CD14-positive monocyte (primary cell): ENCODE measurements at regions of chr17 and their contacts with region 1.

Region 1: GRCh38 chr17:42720996-42721583 is 23.8 kb downstream of the EZH1 start:
- DNase-seq: peak; percentile 41 to 69 (median 56)
- H3K4me3 ChIP-seq: no peak overlapping the region
- H3K4me3 Mint-ChIP-seq: no peak overlapping the region
- H3K27ac ChIP-seq: no peak overlapping the region
- H3K27ac Mint-ChIP-seq: no peak overlapping the region
- H3K4me1 ChIP-seq: no peaks in the 10 kb centered on the region
- H3K4me1 Mint-ChIP-seq: no peaks in the 10 kb centered on the region
- H3K27me3 ChIP-seq: no peaks in the 10 kb centered on the region
- H3K27me3 Mint-ChIP-seq: no peaks in the 10 kb centered on the region
- CTCF ChIP-seq: peak; percentile 80

Region 2: GRCh38 chr17:42403150-42403549 is 317.9 kb before region 1 on chr17:
- intact Hi-C with region 1: no loop called
- DNase-seq: no peak
- H3K4me3 ChIP-seq: no peak overlapping the region
- H3K4me3 Mint-ChIP-seq: peak overlapping the region in 1 of 2 donors; percentile 12
- H3K27ac ChIP-seq: no peak overlapping the region
- H3K27ac Mint-ChIP-seq: peak overlapping the region in 1 of 7 donors; percentile 13
- H3K4me1 ChIP-seq: peaks cover 14 to 17% of the 10 kb centered on the region in 2 donors
- H3K4me1 Mint-ChIP-seq: peaks cover 20% of the 10 kb centered on the region
- H3K27me3 ChIP-seq: peaks cover 0 to 7% of the 10 kb centered on the region in 2 donors
- H3K27me3 Mint-ChIP-seq: peaks cover 9 to 17% (median 13%) of the 10 kb centered on the region in 3 donors
- CTCF ChIP-seq: no peak

Region 3: DNA sequence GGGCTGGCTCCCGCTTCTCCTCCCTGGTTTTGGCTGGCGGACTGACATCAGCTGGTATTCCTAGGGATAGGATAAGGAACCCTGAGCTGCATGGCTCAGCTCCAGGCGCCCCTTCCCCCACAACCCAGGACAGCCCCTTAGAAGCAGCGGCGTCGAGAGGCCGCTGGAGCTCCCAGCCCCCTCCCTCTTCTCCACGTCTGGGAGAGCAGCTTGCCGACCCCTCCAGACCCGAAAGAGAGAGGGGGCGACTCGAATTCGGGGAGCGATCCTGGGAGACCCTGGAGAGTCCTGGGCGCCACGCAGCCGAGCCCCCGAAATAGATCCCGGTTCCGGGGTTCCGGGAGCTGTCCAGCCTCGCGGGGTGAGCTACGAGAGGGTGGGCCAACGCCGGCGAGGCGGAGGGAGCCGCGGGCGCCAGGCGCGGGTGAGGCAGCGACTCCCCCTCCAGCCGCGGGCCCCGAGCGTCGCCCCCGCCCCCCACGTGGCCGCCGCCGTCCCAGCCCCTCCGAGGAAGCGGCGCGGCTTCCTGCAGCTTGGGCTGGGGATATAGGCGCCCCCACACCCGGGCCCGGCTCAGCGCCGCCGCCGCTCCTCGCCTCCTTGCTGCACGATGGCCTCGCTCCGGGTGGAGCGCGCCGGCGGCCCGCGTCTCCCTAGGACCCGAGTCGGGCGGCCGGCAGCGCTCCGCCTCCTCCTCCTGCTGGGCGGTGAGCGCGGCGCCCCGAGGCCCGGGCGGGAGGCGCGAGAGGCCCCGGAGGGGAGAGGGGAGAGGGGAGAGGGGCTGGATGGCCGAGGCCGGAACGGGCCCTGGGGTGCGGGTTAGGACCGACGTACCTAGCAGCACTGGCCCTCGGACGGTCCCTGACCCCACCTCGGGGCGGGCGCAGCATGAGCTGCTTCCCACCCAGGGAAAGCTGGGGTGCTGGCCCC is 39.8 kb after region 1 on chr17 and contains the start of gene RAMP2:
- intact Hi-C with region 1: loop called (anchors 1 to 2 kb)
- DNase-seq: no peak
- H3K4me3 ChIP-seq: peak within 1 kb of the TSS in 1 of 3 experiments; percentile 59
- H3K4me3 Mint-ChIP-seq: peak within 1 kb of the TSS in 1 of 2 donors; percentile 78
- H3K27ac ChIP-seq: no peak within 1 kb of the TSS
- H3K27ac Mint-ChIP-seq: peak within 1 kb of the TSS in 1 of 7 donors; percentile 8
- H3K4me1 ChIP-seq: peaks cover 21% of the 10 kb centered on the region in 2 donors
- H3K4me1 Mint-ChIP-seq: peaks cover 18% of the 10 kb centered on the region
- H3K27me3 ChIP-seq: peaks cover 30 to 39% of the 10 kb centered on the region in 2 donors
- H3K27me3 Mint-ChIP-seq: peaks cover 46 to 63% (median 50%) of the 10 kb centered on the region in 3 donors
- CTCF ChIP-seq: no peak
- polyA plus RNA-seq, gene RAMP2: not detected

Region 4: DNA sequence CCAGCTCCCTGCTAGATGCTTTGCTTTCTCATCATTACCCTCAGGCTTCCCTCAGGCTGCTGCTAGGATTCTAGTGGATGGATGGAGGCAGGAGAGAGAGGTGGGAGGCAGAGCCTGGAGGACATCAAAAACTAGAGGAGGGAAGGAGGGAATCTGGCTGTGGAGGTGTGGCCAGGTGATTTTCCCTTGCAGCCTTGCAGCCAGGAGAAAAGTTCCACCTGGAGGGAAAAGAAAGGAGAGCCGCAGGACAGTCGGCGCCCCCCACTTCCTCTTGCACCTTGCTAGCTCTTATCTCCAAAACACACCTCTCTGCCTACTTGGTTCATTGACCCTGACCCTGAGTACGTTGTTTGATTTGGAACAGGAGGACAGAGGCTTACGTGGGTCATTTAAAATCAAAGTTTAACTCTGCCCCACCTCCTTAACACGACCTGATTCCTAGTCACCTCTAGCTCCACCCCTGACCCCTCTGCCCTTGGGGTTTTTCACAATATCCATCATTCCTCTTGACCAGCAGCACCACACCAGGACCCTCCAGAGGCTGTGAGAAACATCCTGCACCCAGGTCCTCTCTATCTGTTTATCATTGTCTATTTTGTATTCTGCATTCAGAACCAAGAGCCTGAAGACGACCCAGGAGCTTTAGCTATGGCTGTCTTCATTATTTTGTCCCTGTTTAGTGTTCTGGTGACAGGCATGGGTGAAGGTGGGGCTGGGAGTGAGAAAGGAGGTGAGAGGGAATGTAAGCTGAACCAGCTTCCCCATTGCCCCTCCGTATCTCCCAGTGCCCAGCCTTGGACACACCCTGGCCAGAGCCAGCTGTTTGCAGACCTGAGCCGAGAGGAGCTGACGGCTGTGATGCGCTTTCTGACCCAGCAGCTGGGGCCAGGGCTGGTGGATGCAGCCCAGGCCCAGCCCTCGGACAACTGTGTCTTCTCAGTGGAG is 145.8 kb after region 1 on chr17:
- intact Hi-C with region 1: no loop called
- DNase-seq: no peak
- H3K4me3 ChIP-seq: no peak overlapping the region
- H3K4me3 Mint-ChIP-seq: no peak overlapping the region
- H3K27ac ChIP-seq: no peak overlapping the region
- H3K27ac Mint-ChIP-seq: no peak overlapping the region
- H3K4me1 ChIP-seq: no peaks in the 10 kb centered on the region
- H3K4me1 Mint-ChIP-seq: no peaks in the 10 kb centered on the region
- H3K27me3 ChIP-seq: no peaks in the 10 kb centered on the region
- H3K27me3 Mint-ChIP-seq: peaks cover 2 to 11% (median 4%) of the 10 kb centered on the region in 3 donors
- CTCF ChIP-seq: no peak